ENCODE measurements at regions of chr10 and their contacts with region 1.

Region 1: DNA sequence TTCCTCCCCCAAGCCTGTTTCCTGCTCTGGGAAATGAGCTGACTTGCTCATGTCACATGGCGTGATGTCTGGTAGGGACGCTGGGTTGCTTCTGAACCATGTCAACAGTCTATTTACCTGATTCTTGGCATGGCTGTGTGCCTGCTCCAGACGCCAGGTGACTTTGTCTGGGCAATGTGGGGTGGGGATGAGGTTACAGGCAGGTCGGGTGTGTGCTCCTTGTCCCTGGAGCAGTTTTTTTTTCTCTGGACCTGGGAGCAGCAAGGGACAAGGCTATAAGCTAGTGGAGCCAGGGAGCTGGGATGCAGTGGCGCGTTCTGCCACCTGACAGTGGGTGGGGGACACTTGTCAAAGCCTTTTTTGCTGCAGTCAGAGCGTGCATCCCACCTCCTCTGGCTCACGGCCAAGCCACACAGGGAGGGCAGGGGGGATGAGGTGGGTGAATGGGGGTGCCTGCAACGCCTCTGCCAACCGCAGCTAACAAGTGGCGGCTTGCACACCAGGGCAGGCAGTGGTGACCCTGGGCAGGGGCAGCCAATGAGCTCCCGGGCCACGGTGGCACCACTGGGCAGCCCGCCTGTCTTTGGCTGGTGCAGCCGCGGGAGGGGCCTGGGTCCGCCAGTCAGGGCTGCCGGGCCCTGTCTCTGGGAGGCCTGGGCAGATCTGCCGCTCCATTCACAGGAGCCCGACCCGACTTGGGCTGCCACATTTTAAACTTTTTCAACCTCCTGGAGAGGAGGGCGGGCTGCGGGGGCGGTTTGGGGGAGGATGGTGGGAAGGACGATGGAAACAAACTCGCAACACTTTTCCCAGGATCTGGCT is 22.9 kb downstream of the DNAJB12 start:
- DNase-seq: peak; percentile 97
- ATAC-seq: peak; percentile 70
- H3K4me3 Mint-ChIP-seq: peak overlapping the region; percentile 94
- H3K27ac Mint-ChIP-seq: peak overlapping the region; percentile 99
- H3K4me1 Mint-ChIP-seq: peaks cover 89% of the 10 kb centered on the region
- H3K27me3 Mint-ChIP-seq: no peaks in the 10 kb centered on the region

Region 2: DNA sequence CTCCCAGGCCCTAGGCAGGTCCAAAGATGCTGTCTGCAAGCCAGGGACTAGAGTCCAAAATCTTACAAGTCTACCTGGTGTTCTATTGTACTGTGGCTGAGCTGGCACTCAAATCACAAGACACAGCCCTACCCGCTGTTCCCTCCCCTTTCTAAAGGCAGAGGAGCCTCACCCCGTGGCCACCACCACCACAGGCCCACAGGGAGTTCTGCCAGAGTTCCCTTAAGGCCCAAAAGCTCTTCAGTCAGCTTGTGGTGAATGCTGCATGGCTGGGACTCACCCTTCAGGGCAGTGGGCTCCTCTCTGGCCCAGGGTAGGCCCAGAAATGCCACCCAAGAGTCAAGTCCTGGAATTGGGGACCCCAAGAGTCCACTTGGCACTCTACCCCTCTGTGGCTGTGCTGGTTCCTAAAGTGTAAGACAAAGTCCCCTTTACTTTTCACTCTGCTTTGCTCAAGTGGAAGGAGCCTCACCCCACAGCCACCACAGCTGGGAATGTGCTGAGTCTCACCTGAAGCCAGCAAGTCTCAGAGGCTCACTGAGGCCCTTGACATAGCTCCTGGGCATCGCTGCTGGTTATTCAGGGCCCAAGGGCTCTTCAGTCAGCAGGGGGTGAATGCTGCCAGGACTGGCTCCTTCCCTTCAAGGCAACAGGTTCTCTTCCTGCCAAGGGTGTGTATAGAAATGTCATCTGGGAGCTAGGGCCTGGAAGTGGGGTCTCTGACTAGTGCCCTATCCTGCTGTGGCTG is 432.0 kb before region 1 on chr10:
- CTCF ChIA-PET with region 1: interaction called, 3 read pairs
- POLR2A ChIA-PET with region 1: no interaction called
- intact Hi-C with region 1: loop called in 1 of 2 experiments (anchors 5 kb)
- DNase-seq: no peak
- ATAC-seq: no peak
- H3K4me3 Mint-ChIP-seq: no peak overlapping the region
- H3K27ac Mint-ChIP-seq: no peak overlapping the region
- H3K4me1 Mint-ChIP-seq: no peaks in the 10 kb centered on the region
- H3K27me3 Mint-ChIP-seq: no peaks in the 10 kb centered on the region

Region 3: GRCh38 chr10:72126184-72126871 is 205.5 kb before region 1 on chr10:
- CTCF ChIA-PET with region 1: interaction called, 34 read pairs
- POLR2A ChIA-PET with region 1: no interaction called
- intact Hi-C with region 1: no loop called
- DNase-seq: no peak
- ATAC-seq: peak; percentile 44
- H3K4me3 Mint-ChIP-seq: no peak overlapping the region
- H3K27ac Mint-ChIP-seq: no peak overlapping the region
- H3K4me1 Mint-ChIP-seq: peaks cover 39% of the 10 kb centered on the region
- H3K27me3 Mint-ChIP-seq: no peaks in the 10 kb centered on the region

Region 4: DNA sequence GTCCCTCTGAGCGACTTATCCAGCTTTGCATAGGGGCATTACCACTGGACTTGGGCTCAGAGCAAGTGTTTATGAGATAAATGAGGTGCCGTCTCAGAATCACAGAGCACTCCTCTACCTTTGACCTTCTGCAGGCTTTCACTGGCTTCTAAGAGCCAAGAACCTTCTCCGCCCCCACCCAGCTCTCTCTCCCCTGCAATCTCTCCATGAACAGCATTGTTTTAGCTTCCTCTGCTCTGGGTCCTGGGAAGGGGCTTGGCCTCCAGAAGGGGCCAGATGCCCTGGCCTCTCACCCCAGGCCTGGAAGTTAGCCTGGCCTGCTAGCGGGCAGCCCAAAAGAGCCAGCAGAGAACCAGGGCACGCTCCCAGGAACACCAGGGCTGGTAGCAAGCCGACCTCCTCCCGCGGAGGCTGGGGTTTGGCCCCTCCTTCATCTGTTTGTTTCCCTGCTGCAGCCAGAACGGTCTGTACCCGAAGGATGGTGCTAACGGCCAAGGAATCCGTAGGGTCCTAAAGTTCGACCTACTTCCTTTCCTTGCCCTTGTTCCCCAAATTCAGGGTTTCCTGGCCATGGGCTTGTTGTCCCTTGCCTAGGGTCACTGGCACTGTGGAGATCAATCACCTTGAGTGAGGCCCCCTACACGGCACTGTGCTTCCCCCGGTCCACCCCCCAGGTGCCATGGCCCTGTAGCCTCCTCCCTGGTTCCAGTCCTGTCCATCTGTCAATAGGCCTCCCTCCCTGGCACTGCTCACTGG is 76.8 kb before region 1 on chr10:
- CTCF ChIA-PET with region 1: interaction called, 13 read pairs
- POLR2A ChIA-PET with region 1: interaction called, 10 read pairs
- intact Hi-C with region 1: loop called in 1 of 2 experiments (anchors 1 kb)
- DNase-seq: peak; percentile 64
- ATAC-seq: peak; percentile 46
- H3K4me3 Mint-ChIP-seq: peak overlapping the region; percentile 58
- H3K27ac Mint-ChIP-seq: peak overlapping the region; percentile 92
- H3K4me1 Mint-ChIP-seq: peaks cover 80% of the 10 kb centered on the region
- H3K27me3 Mint-ChIP-seq: no peaks in the 10 kb centered on the region

Region 5: GRCh38 chr10:72273410-72274212 is 58.2 kb before region 1 on chr10 and contains the start of gene DDIT4:
- CTCF ChIA-PET with region 1: interaction called, 32 read pairs
- POLR2A ChIA-PET with region 1: interaction called, 48 read pairs
- intact Hi-C with region 1: loop called (anchors 1 to 2 kb)
- DNase-seq: peak; percentile 100
- ATAC-seq: peak; percentile 84
- H3K4me3 Mint-ChIP-seq: peak within 1 kb of the TSS; percentile 95
- H3K27ac Mint-ChIP-seq: peak within 1 kb of the TSS; percentile 99
- H3K4me1 Mint-ChIP-seq: peaks cover 44% of the 10 kb centered on the region
- H3K27me3 Mint-ChIP-seq: no peaks in the 10 kb centered on the region
- total RNA-seq, gene DDIT4: 750 to 1,039 TPM

Region 6: DNA sequence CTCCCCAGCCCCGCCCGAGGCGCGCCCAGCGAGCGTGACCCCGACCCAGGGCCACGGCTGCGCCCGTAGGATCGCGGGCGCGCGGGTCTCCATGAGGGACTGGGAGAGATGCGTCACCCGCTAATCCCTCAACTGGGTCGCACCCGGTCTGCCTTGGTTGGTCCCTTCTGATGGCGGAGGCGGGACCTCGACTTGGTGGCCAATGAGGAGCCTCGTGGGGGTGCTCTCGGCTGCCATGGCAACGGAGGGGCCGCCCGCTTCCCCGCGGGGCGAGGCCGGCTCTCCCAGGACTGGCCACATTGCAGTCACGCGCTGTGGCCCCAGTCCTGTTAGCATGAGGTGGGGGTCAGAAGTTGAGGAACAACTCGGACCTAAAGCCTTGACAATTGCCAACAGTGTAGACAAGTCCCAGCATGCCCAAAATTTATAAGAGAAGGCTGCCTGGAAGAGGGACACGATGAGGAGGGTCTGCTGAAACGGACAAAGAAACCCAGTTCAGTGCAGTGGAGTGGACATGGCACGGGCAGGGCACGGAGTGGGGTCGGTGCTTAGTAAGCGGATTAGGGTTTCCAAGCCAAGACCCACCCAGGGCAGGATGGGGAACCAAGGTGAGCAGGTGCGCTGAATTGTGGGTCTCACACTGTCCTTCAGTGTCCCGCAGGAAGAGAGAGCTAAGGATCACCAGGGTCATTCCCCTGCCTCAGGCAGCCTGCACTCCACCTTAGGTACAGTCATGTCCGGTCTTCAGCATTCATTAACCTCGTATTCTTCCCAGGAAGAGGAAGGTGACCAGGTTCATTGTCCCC is 33.6 kb before region 1 on chr10:
- CTCF ChIA-PET with region 1: interaction called, 20 read pairs
- POLR2A ChIA-PET with region 1: interaction called, 75 read pairs
- intact Hi-C with region 1: loop called (anchors 1 to 2 kb)
- DNase-seq: peak; percentile 98
- ATAC-seq: peak; percentile 72
- H3K4me3 Mint-ChIP-seq: peak overlapping the region; percentile 80
- H3K27ac Mint-ChIP-seq: peak overlapping the region; percentile 99
- H3K4me1 Mint-ChIP-seq: peaks cover 68% of the 10 kb centered on the region
- H3K27me3 Mint-ChIP-seq: no peaks in the 10 kb centered on the region

Region 7: GRCh38 chr10:72319416-72320254 is 12.2 kb before region 1 on chr10:
- CTCF ChIA-PET with region 1: interaction called, 8 read pairs
- POLR2A ChIA-PET with region 1: interaction called, 29 read pairs
- intact Hi-C with region 1: loop called (anchors 1 kb)
- DNase-seq: peak; percentile 95
- ATAC-seq: peak; percentile 48
- H3K4me3 Mint-ChIP-seq: peak overlapping the region; percentile 86
- H3K27ac Mint-ChIP-seq: peak overlapping the region; percentile 100
- H3K4me1 Mint-ChIP-seq: peaks cover 84% of the 10 kb centered on the region
- H3K27me3 Mint-ChIP-seq: no peaks in the 10 kb centered on the region